ENCODE measurements at regions of chr1 and their contacts with region 1.

Region 1: DNA sequence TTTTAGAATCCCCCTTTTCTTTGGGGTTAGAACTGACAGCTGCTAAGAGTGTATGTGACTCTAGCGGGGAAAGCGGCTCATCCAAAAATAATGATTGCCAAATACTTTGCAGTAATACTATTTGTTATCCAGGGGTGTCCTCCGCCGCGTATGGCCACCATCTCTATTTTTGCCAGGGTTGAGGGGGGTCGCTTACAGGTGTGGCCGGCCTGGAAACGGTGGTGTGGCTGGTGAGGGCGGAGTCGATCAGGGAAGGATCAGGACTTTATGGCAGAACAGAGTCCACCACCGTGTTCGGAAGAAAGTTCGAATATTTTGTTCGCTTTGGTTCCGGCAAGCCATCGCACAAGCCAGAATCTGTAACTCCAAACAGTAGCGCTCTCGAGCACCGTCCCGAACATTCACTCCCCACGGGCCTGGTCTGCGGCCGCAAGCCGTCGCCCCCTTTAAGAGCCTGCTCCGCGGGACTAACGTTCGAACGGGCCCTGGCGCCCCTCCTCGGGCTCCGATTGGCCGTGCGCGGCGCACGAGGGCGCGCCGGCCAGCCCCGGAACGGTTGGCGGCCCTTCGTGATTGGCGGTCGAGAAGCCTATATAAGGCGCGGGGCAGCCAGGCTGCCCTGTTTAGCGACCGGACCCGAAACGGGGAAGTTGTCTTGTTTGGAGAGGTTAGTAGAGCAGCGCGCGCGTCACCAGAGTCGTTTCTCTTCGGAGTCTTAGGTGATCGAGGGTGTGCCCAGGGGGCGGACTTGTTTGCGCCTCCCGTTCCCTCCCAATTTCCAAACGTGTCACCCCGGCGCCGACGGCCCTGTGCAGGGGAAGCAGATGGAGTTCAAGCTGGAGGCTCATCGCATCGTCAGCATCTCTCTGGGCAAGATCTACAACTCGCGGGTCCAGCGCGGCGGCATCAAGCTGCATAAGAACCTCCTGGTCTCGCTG is at the start of gene IER5:
- DNase-seq: peak; percentile 96
- H3K4me3 Mint-ChIP-seq: peak within 1 kb of the TSS; percentile 99
- H3K27ac Mint-ChIP-seq: peak within 1 kb of the TSS; percentile 99
- H3K4me1 Mint-ChIP-seq: peaks cover 44% of the 10 kb centered on the region
- H3K27me3 Mint-ChIP-seq: no peaks in the 10 kb centered on the region
- total RNA-seq, gene IER5: 33.5 to 34.4 TPM

Region 2: DNA sequence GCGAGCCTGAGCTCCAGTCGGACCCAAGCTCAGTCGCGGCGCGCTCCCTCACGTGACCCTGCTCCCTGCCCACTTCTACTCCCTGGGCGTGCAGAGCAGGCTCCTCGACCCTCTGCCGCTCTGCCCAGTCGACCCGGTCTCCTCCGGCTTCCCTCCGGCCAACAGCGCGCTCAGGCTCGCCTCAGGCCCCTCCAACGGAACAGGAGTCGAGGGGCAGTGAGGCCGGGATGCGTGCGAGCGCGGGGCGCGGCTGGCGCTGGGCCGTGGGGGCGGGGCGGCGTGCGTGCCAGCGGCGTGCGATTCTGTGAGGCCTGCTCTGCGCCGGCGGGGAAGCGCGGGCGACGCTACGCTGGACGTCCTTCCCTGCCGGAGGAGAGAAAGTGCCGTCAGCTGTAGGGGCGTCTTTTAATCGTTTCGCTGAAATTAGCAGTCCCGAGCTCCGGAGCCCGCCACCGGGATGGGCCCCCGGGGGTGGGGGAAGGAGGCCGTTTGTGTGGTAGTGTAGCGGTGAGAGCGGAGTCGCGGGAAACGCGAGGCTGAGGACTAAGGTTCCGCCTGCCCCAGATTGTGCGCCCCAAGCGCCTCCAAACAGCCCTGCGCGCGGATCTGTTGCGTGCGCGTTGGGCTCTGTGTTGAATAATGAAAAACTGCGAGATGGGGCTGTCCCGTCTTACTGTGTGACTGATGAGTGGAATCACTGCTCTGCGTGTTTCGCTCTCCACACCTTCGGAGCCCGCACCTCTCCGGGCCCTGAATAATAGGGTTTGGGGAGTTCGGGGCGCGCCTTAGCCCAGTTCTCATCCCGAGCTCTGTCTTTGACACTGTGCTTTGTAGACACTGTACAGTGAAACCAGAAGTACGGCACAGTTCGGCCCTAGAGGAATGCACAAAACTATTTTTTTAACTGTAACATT is 585.7 kb before region 1 on chr1 and contains the start of gene ACBD6:
- CTCF ChIA-PET with region 1: no interaction called
- intact Hi-C with region 1: loop called (anchors 1 kb)
- DNase-seq: peak; percentile 92
- H3K4me3 Mint-ChIP-seq: peak within 1 kb of the TSS; percentile 98
- H3K27ac Mint-ChIP-seq: peak within 1 kb of the TSS; percentile 93
- H3K4me1 Mint-ChIP-seq: peaks cover 34% of the 10 kb centered on the region
- H3K27me3 Mint-ChIP-seq: no peaks in the 10 kb centered on the region
- total RNA-seq, gene ACBD6: 31.1 to 32.9 TPM

Region 3: DNA sequence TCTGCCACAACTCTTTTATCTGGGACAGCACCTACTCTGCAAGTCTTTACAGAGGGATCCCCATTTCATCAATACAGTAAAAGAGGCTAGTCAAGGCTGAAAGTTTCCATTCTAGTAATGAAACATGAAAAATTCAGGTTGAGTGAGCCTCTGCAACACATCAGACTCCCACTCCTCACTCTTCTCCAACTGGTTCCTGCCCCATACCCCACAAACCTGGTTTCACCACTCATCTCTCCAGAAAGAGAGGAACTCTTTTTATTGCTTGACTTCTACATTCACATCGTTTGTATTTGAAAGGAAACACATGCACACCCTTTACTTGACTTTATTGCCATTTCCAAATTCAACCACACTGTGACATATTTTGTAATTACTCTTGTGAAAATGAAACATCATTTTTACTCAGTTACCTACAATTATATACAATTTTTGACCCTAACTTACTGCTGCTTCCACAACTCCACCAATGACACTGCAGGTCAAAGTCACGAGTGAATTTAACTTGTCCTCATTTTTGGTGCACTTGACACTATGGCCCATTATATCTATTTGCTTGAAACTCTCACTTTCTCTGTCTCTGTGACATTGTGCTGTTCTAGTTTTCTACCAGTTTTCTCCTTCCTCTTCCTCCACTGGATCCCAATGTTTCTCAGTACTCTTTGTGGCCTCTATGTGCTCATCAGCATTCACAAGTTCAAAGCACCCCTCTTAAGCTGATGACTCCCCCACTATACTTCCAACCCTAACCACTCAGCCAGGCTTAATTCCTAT is 73.7 kb before region 1 on chr1:
- CTCF ChIA-PET with region 1: no interaction called
- intact Hi-C with region 1: loop called (anchors 1 kb)
- DNase-seq: peak; percentile 33
- H3K4me3 Mint-ChIP-seq: no peak overlapping the region
- H3K27ac Mint-ChIP-seq: no peak overlapping the region
- H3K4me1 Mint-ChIP-seq: peaks cover 43% of the 10 kb centered on the region
- H3K27me3 Mint-ChIP-seq: no peaks in the 10 kb centered on the region

Region 4: GRCh38 chr1:181044449-181044966 is 43.8 kb before region 1 on chr1:
- CTCF ChIA-PET with region 1: interaction called, 6 read pairs
- intact Hi-C with region 1: loop called (anchors 1 kb)
- DNase-seq: peak; percentile 80
- H3K4me3 Mint-ChIP-seq: no peak overlapping the region
- H3K27ac Mint-ChIP-seq: peak overlapping the region; percentile 64
- H3K4me1 Mint-ChIP-seq: peaks cover 36% of the 10 kb centered on the region
- H3K27me3 Mint-ChIP-seq: no peaks in the 10 kb centered on the region

Region 5: GRCh38 chr1:181105134-181106021 is 17.0 kb after region 1 on chr1:
- CTCF ChIA-PET with region 1: interaction called, 8 read pairs
- intact Hi-C with region 1: loop called (anchors 1 kb)
- DNase-seq: peak; percentile 93
- H3K4me3 Mint-ChIP-seq: peak overlapping the region; percentile 80
- H3K27ac Mint-ChIP-seq: no peak overlapping the region
- H3K4me1 Mint-ChIP-seq: peaks cover 70% of the 10 kb centered on the region
- H3K27me3 Mint-ChIP-seq: peaks cover 11% of the 10 kb centered on the region

Region 6: GRCh38 chr1:181126938-181127587 is 38.7 kb after region 1 on chr1:
- CTCF ChIA-PET with region 1: no interaction called
- intact Hi-C with region 1: no loop called
- DNase-seq: no peak
- H3K4me3 Mint-ChIP-seq: no peak overlapping the region
- H3K27ac Mint-ChIP-seq: no peak overlapping the region
- H3K4me1 Mint-ChIP-seq: peaks cover 22% of the 10 kb centered on the region
- H3K27me3 Mint-ChIP-seq: peaks cover 6% of the 10 kb centered on the region

Region 7: DNA sequence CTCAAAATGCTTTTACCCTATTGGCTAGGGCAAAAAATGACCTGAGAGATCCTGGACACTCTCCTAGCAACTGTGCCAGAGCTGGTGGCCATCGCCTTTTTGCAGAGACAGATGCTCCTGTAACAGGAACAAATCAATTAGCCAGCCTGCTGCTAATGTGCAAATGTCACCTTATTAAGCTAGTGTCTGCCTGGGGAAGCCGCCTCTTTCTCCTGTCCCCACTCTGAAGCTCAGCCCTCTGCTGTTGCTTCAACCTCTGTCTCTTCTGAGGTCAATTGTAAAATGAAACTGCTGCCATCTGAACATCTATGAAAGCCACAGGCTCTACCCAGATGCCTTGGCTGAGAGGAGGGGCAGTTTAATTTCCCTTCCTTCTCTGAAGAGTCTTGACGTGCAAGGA is 309.5 kb after region 1 on chr1:
- CTCF ChIA-PET with region 1: no interaction called
- intact Hi-C with region 1: loop called (anchors 2 kb)
- DNase-seq: peak; percentile 23
- H3K4me3 Mint-ChIP-seq: no peak overlapping the region
- H3K27ac Mint-ChIP-seq: no peak overlapping the region
- H3K4me1 Mint-ChIP-seq: peaks cover 39% of the 10 kb centered on the region
- H3K27me3 Mint-ChIP-seq: no peaks in the 10 kb centered on the region